ENCODE measurements at regions of chr18 and their contacts with region 1.

Region 1: GRCh38 chr18:47558110-47558750 is 306.8 kb upstream of the SKOR2 start:
- DNase-seq: no peak
- H3K4me3 ChIP-seq: no peak overlapping the region
- H3K4me3 Mint-ChIP-seq: no peak overlapping the region
- H3K27ac ChIP-seq: no peak overlapping the region
- H3K27ac Mint-ChIP-seq: no peak overlapping the region
- H3K4me1 ChIP-seq: no peaks in the 10 kb centered on the region
- H3K4me1 Mint-ChIP-seq: no peaks in the 10 kb centered on the region
- H3K27me3 ChIP-seq: no peaks in the 10 kb centered on the region
- H3K27me3 Mint-ChIP-seq: peaks cover 2 to 13% (median 12%) of the 10 kb centered on the region in 3 donors
- CTCF ChIP-seq: no peak

Region 2: DNA sequence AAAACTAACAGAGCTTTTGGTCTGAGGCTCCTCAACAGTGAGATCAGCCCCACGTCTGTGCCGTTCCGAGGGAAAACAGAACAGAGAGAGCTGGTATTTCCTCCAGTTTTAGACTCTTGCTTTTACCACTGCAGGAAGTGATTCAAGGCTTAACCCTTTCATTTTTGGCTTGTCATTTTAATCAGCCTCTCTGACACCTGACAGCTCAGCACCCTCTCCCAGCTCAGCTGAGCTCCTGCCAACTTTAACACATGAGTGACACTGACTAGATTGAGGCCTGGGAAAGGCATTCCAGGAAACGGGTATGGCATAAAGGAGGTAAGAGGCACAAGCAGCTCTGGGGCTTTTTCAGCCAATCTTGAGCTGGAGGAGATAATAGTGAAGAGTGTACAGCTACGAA is 67.3 kb before region 1 on chr18:
- intact Hi-C with region 1: no loop called
- DNase-seq: no peak
- H3K4me3 ChIP-seq: no peak overlapping the region
- H3K4me3 Mint-ChIP-seq: no peak overlapping the region
- H3K27ac ChIP-seq: no peak overlapping the region
- H3K27ac Mint-ChIP-seq: no peak overlapping the region
- H3K4me1 ChIP-seq: no peaks in the 10 kb centered on the region
- H3K4me1 Mint-ChIP-seq: no peaks in the 10 kb centered on the region
- H3K27me3 ChIP-seq: no peaks in the 10 kb centered on the region
- H3K27me3 Mint-ChIP-seq: peaks cover 0 to 3% (median 0%) of the 10 kb centered on the region in 3 donors
- CTCF ChIP-seq: no peak

Region 3: GRCh38 chr18:47615043-47615442 is 56.8 kb after region 1 on chr18:
- intact Hi-C with region 1: loop called in 1 of 2 experiments (anchors 10 kb)
- DNase-seq: no peak
- H3K4me3 ChIP-seq: no peak overlapping the region
- H3K4me3 Mint-ChIP-seq: no peak overlapping the region
- H3K27ac ChIP-seq: no peak overlapping the region
- H3K27ac Mint-ChIP-seq: no peak overlapping the region
- H3K4me1 ChIP-seq: no peaks in the 10 kb centered on the region
- H3K4me1 Mint-ChIP-seq: no peaks in the 10 kb centered on the region
- H3K27me3 ChIP-seq: no peaks in the 10 kb centered on the region
- H3K27me3 Mint-ChIP-seq: peaks cover 0 to 2% (median 1%) of the 10 kb centered on the region in 3 donors
- CTCF ChIP-seq: no peak